Gastrocnemius medialis (tissue), 4 donors: ENCODE measurements at regions of chr15 and their contacts with region 1.

Region 1: GRCh38 chr15:31435261-31435911 is 108.8 kb downstream of the KLF13 start:
- DNase-seq: peak; percentile 59 to 81
- ATAC-seq: peak; percentile 77 to 90
- H3K4me3 ChIP-seq: peak overlapping the region in 3 of 4 donors; percentile 3 to 23 (median 7)
- H3K27ac ChIP-seq: peak overlapping the region; percentile 58 to 69 (median 64)
- H3K4me1 ChIP-seq: peaks cover 13 to 14% of the 10 kb centered on the region in 2 donors
- H3K27me3 ChIP-seq: no peaks in the 10 kb centered on the region
- CTCF ChIP-seq: peak; percentile 60 to 80 (median 68)
- POLR2A ChIP-seq: no peak

Region 2: DNA sequence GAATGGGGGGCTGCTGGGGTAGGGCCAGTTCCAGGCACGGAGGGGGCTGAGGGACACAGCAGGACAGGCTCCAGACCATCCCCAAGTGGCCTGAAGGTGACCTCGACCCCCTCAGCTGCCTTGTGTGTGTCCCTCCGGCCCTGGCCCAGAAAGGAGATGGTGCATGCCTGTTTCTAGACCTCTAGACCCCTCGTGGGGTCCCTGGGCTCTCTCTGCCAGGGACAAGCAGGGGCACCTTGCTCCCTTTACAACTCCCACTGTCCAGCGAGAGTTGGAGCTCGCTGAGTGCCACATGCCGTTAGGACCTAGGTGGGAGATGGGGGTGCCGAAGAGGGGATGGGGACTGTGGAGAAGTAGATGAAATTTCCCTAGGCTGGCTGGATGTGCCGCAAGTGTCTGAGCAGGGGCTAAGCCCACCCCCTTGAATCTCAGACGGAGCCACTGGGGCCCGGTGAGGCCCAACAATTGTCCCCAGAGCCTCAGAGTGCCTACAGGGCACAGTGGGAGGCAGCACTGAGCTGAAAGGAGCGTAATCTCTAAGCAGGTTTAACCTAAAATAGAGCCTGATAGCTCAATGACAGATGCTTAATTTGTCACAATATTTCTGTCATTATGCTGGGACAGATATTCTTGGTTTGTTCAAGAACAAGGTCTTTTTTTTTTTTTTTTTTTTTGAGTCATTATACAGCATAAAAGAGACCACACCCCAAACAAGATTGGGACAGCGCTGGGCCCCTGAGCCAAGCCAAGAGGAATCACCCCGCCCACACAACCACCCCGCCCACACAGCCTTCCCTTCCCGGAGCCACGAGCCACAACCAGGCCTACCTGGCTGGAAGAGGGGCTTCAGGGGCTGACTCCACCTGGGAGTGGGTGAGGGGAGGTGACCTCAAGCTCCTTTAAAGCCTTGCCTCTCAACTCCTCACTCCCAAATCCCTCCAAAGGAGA is 132.3 kb before region 1 on chr15:
- in situ Hi-C with region 1: loop called in 1 of 4 experiments (anchors 25 kb)
- intact Hi-C with region 1: no loop called
- DNase-seq: peak in 1 of 2 donors; percentile 23
- ATAC-seq: peak in 1 of 2 donors; percentile 30
- H3K4me3 ChIP-seq: no peak overlapping the region
- H3K27ac ChIP-seq: no peak overlapping the region
- H3K4me1 ChIP-seq: peaks cover 6 to 10% of the 10 kb centered on the region in 2 donors
- H3K27me3 ChIP-seq: peaks cover 0 to 4% (median 3%) of the 10 kb centered on the region in 3 donors
- CTCF ChIP-seq: peak in 1 of 5 experiments; percentile 26
- POLR2A ChIP-seq: no peak

Region 3: GRCh38 chr15:32033186-32033890 is 598.0 kb after region 1 on chr15:
- in situ Hi-C with region 1: no loop called
- intact Hi-C with region 1: no loop called
- DNase-seq: no peak
- ATAC-seq: no peak
- H3K4me3 ChIP-seq: no peak overlapping the region
- H3K27ac ChIP-seq: no peak overlapping the region
- H3K4me1 ChIP-seq: peaks cover 10 to 13% of the 10 kb centered on the region in 2 donors
- H3K27me3 ChIP-seq: peaks cover 7 to 13% (median 10%) of the 10 kb centered on the region in 3 donors
- CTCF ChIP-seq: no peak
- POLR2A ChIP-seq: no peak